B cell (primary cell): ENCODE measurements at regions of chr6 and their contacts with region 1.

Region 1: DNA sequence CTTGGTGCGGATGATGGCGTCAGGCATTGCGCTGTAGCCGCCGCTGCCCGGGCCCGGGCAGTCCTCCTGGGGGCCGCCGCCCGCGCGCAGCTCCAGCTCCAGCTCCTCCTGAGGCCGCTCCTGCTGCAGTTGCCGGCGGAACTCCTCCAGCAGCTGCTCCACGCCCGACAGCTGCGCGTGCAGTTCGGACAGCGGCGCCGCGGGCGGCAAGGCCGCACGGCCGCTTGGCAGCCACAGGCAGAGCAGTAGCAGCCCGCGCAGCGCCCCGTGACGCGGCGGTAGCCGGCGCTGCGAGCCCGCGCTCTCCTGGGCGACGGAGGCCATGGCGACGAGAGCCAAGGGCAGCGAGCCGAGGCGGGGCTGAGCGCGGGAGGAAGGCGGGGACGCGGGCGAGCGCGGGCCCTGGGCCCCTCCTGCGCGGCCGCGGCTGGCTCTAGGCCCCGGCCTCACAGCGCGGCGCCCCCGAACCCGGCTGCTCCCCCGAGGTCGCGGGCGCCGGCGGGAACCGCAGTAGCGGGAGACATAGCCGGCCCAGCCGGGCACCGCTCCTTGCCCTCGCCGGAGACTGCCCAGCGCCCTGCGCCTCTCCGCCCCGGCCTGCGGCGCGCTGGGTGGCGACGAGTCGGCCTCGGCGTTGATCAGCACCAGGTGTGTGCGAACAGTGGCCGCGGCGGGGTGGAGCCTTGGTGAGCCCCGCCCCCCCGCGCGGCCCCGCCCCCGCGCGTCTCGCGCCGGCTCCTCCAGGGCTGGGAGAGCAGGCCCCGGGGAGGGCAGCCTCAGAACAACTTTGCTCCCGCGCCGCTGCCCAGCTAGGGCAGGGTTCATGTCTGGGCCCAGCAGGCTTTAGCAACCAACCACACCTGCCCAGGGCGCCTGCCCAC is at the start of gene LRP11:
- DNase-seq: peak; percentile 87
- ATAC-seq: peak; percentile 90
- H3K4me3 ChIP-seq: peak within 1 kb of the TSS; percentile 13 to 65 (median 51)
- H3K4me3 Mint-ChIP-seq: peak within 1 kb of the TSS; percentile 84
- H3K27ac ChIP-seq: no peak within 1 kb of the TSS
- H3K27ac Mint-ChIP-seq: no peak within 1 kb of the TSS
- H3K4me1 ChIP-seq: peaks cover 13 to 14% of the 10 kb centered on the region in 2 donors
- H3K4me1 Mint-ChIP-seq: peaks cover 12% of the 10 kb centered on the region
- H3K27me3 ChIP-seq: peaks cover 2 to 32% (median 20%) of the 10 kb centered on the region in 4 experiments
- H3K27me3 Mint-ChIP-seq: peaks cover 29% of the 10 kb centered on the region
- CTCF ChIP-seq: no peak
- total RNA-seq, gene LRP11: 1.00 and 1.2 TPM in 2 replicates

Region 2: DNA sequence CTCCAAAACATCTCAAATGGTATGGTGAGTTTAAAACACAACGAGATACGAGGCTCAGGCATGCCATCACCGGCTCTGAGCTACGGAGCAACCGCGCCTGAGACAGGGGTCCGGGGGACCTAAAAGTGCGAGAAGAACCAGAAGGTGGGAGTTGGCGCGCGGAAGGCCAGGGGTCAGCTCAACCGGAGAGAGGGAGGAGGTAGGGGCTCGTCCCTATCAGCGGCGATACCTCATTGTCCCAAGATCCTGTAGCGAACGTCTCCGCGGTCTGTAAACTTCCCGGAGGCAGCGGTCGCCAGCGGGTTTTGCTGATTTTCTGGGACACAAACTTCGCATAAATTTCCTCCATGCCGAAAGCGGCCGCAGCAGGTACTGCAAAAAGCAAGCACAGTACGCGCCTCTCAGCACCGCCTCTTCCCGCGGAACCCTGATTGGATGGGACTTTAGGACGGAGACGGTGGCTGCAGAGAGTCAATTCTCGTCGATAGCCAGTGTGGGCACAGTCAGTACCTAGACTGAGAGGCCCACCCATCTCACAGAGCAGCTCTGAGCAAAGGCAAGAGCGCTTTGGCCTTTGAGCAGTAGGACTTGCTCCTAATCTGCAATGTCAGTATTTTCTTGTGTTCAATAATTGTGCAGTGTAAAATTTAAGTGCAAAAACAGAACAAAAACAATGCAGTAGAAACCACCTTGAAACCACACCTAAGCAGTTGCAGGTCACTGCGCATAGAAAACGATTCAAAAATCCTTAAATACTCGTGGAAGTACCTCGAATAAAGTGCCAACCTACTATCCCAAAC is 117.6 kb before region 1 on chr6 and contains the start of gene NUP43:
- CTCF ChIA-PET with region 1: no interaction called
- POLR2A ChIA-PET with region 1: no interaction called
- intact Hi-C with region 1: loop called (anchors 5 kb)
- DNase-seq: peak; percentile 93
- ATAC-seq: peak; percentile 67
- H3K4me3 ChIP-seq: peak within 1 kb of the TSS; percentile 74 to 97 (median 80)
- H3K4me3 Mint-ChIP-seq: peak within 1 kb of the TSS; percentile 96
- H3K27ac ChIP-seq: peak within 1 kb of the TSS; percentile 63 to 65
- H3K27ac Mint-ChIP-seq: peak within 1 kb of the TSS; percentile 90
- H3K4me1 ChIP-seq: peaks cover 23 to 29% of the 10 kb centered on the region in 2 donors
- H3K4me1 Mint-ChIP-seq: peaks cover 28% of the 10 kb centered on the region
- H3K27me3 ChIP-seq: no peaks in the 10 kb centered on the region
- H3K27me3 Mint-ChIP-seq: no peaks in the 10 kb centered on the region
- CTCF ChIP-seq: peak; percentile 71
- total RNA-seq, gene NUP43: 75.7 and 77.7 TPM in 2 replicates

Region 3: GRCh38 chr6:149779644-149779963 is 84.3 kb before region 1 on chr6:
- CTCF ChIA-PET with region 1: no interaction called
- POLR2A ChIA-PET with region 1: no interaction called
- intact Hi-C with region 1: no loop called
- DNase-seq: no peak
- ATAC-seq: no peak
- H3K4me3 ChIP-seq: no peak overlapping the region
- H3K4me3 Mint-ChIP-seq: no peak overlapping the region
- H3K27ac ChIP-seq: no peak overlapping the region
- H3K27ac Mint-ChIP-seq: no peak overlapping the region
- H3K4me1 ChIP-seq: no peaks in the 10 kb centered on the region
- H3K4me1 Mint-ChIP-seq: no peaks in the 10 kb centered on the region
- H3K27me3 ChIP-seq: no peaks in the 10 kb centered on the region
- H3K27me3 Mint-ChIP-seq: no peaks in the 10 kb centered on the region
- CTCF ChIP-seq: no peak

Region 4: GRCh38 chr6:149834513-149835481 is 29.1 kb before region 1 on chr6:
- CTCF ChIA-PET with region 1: interaction called, 21 read pairs
- POLR2A ChIA-PET with region 1: no interaction called
- intact Hi-C with region 1: loop called (anchors 1 kb)
- DNase-seq: peak; percentile 78
- ATAC-seq: peak; percentile 70
- H3K4me3 ChIP-seq: no peak overlapping the region
- H3K4me3 Mint-ChIP-seq: no peak overlapping the region
- H3K27ac ChIP-seq: no peak overlapping the region
- H3K27ac Mint-ChIP-seq: no peak overlapping the region
- H3K4me1 ChIP-seq: no peaks in the 10 kb centered on the region
- H3K4me1 Mint-ChIP-seq: no peaks in the 10 kb centered on the region
- H3K27me3 ChIP-seq: peaks cover 0 to 8% (median 0%) of the 10 kb centered on the region in 4 experiments
- H3K27me3 Mint-ChIP-seq: peaks cover 21% of the 10 kb centered on the region
- CTCF ChIP-seq: peak; percentile 94

Region 5: DNA sequence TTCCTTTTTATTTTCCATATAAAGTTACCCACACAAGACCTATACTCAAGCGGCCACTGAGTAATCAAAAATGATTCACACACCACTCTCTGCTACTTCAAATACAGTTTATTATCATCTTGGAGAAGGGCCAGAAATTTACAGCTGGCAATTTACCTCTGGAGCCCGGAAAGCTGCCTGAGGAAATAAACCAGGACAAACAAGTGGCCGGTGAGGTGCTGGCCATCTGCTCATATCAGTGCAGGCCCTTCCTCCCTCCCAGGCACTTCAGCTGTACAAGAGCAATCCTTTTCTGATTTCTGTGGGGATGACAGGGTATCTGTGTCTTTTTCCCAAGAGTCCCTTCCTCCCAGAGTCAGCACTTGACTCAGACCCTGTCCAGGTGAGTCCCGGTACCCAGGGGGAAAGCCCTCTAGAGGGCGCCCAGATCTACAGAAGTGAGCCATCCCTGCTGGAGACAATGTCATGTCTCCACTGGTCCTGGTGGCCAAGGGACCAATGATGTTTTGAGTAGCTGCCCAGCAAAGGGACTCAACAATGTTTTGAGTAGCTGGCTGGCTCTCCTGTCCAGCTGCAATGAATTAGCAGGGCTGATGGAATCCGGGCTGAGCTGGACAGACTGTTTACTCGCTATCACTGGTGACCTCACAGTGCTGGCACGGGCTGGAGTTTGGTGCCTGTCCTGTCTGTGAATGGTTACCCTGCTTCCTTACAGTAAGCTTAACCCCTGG is 23.4 kb before region 1 on chr6:
- CTCF ChIA-PET with region 1: interaction called, 21 read pairs
- POLR2A ChIA-PET with region 1: no interaction called
- intact Hi-C with region 1: no loop called
- DNase-seq: peak; percentile 55
- ATAC-seq: peak; percentile 41
- H3K4me3 ChIP-seq: no peak overlapping the region
- H3K4me3 Mint-ChIP-seq: no peak overlapping the region
- H3K27ac ChIP-seq: no peak overlapping the region
- H3K27ac Mint-ChIP-seq: no peak overlapping the region
- H3K4me1 ChIP-seq: no peaks in the 10 kb centered on the region
- H3K4me1 Mint-ChIP-seq: no peaks in the 10 kb centered on the region
- H3K27me3 ChIP-seq: peaks cover 0 to 5% (median 2%) of the 10 kb centered on the region in 4 experiments
- H3K27me3 Mint-ChIP-seq: peaks cover 45% of the 10 kb centered on the region
- CTCF ChIP-seq: peak; percentile 56

Region 6: DNA sequence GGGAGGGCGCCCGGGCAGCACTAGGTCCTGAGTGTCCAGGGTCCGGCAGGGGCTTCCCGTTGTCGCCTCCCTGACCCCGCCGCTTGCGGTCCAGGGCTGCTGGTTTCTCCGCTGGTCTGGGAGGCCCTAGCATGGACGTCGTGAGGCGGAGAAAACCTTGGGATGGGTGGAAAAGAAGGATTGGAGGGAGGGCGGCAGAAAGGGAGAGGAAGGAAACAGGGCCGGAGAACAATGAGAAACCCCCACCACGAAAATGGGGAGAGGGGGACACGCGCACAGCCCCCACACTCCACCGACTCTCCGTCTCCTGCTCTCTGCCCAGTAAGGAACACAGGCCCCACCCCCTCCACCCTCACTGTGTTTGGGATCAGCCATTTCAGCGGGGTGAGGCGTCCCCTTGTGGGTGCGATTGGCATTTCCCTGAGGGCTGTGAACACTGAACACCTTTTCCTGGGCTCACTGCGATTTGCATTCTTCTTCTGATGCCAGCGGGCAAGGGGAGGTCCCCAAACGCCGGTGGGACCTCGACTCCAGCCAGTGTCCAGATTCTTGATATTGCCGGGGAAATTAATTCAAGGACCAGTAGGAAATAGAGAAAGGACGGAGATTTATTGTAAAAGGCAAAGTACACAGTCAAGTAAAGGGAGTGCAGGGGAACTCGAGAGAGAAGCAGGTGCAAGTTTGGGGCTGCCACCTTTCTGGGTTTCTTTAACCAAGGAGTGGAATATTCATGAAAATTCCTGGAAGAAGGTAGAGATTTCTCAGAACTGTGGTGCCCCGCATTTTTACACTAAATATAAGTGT is 62.2 kb after region 1 on chr6:
- CTCF ChIA-PET with region 1: no interaction called
- POLR2A ChIA-PET with region 1: no interaction called
- intact Hi-C with region 1: loop called (anchors 2 kb)
- DNase-seq: peak; percentile 71
- ATAC-seq: peak; percentile 57
- H3K4me3 ChIP-seq: no peak overlapping the region
- H3K4me3 Mint-ChIP-seq: peak overlapping the region; percentile 23
- H3K27ac ChIP-seq: no peak overlapping the region
- H3K27ac Mint-ChIP-seq: no peak overlapping the region
- H3K4me1 ChIP-seq: peaks cover 29 to 37% of the 10 kb centered on the region in 2 donors
- H3K4me1 Mint-ChIP-seq: peaks cover 36% of the 10 kb centered on the region
- H3K27me3 ChIP-seq: peaks cover 0 to 71% (median 61%) of the 10 kb centered on the region in 4 experiments
- H3K27me3 Mint-ChIP-seq: peaks cover 86% of the 10 kb centered on the region
- CTCF ChIP-seq: peak; percentile 71

Region 7: GRCh38 chr6:150016324-150017185 is 152.6 kb after region 1 on chr6:
- CTCF ChIA-PET with region 1: no interaction called
- POLR2A ChIA-PET with region 1: no interaction called
- intact Hi-C with region 1: loop called (anchors 2 kb)
- DNase-seq: peak; percentile 85
- ATAC-seq: peak; percentile 78
- H3K4me3 ChIP-seq: no peak overlapping the region
- H3K4me3 Mint-ChIP-seq: peak overlapping the region; percentile 4
- H3K27ac ChIP-seq: no peak overlapping the region
- H3K27ac Mint-ChIP-seq: no peak overlapping the region
- H3K4me1 ChIP-seq: peaks cover 12 to 13% of the 10 kb centered on the region in 2 donors
- H3K4me1 Mint-ChIP-seq: peaks cover 13% of the 10 kb centered on the region
- H3K27me3 ChIP-seq: peaks cover 0 to 51% (median 36%) of the 10 kb centered on the region in 4 experiments
- H3K27me3 Mint-ChIP-seq: peaks cover 66% of the 10 kb centered on the region
- CTCF ChIP-seq: peak; percentile 80

Region 8: GRCh38 chr6:150153542-150153876 is 289.6 kb after region 1 on chr6:
- CTCF ChIA-PET with region 1: no interaction called
- POLR2A ChIA-PET with region 1: no interaction called
- intact Hi-C with region 1: no loop called
- DNase-seq: no peak
- ATAC-seq: no peak
- H3K4me3 ChIP-seq: no peak overlapping the region
- H3K4me3 Mint-ChIP-seq: no peak overlapping the region
- H3K27ac ChIP-seq: no peak overlapping the region
- H3K27ac Mint-ChIP-seq: no peak overlapping the region
- H3K4me1 ChIP-seq: no peaks in the 10 kb centered on the region
- H3K4me1 Mint-ChIP-seq: peaks cover 3% of the 10 kb centered on the region
- H3K27me3 ChIP-seq: peaks cover 0 to 32% (median 15%) of the 10 kb centered on the region in 4 experiments
- H3K27me3 Mint-ChIP-seq: peaks cover 42% of the 10 kb centered on the region
- CTCF ChIP-seq: no peak